K562 (cell line): ENCODE measurements at regions of chr4 and their contacts with region 1.

Region 1: GRCh38 chr4:93791570-93792195 is 36.9 kb upstream of the ATOH1 start:
- DNase-seq: peak; percentile 46 to 70 (median 60)
- ATAC-seq: peak; percentile 95
- H3K4me3 ChIP-seq: no peak overlapping the region
- H3K27ac ChIP-seq: no peak overlapping the region
- H3K4me1 ChIP-seq: no peaks in the 10 kb centered on the region
- H3K27me3 ChIP-seq: no peaks in the 10 kb centered on the region
- CTCF ChIP-seq: peak; percentile 72 to 81 (median 77)
- EP300 ChIP-seq: no peak
- POLR2A ChIP-seq: no peak
- RAD21 ChIP-seq: peak; percentile 74 to 76

Region 2: GRCh38 chr4:93437991-93438390 is 353.7 kb before region 1 on chr4:
- CTCF ChIA-PET with region 1: no interaction called
- POLR2A ChIA-PET with region 1: no interaction called
- in situ Hi-C with region 1: no loop called
- intact Hi-C with region 1: no loop called
- DNase-seq: no peak
- ATAC-seq: no peak
- H3K4me3 ChIP-seq: no peak overlapping the region
- H3K27ac ChIP-seq: no peak overlapping the region
- H3K4me1 ChIP-seq: no peaks in the 10 kb centered on the region
- H3K27me3 ChIP-seq: no peaks in the 10 kb centered on the region
- CTCF ChIP-seq: no peak
- EP300 ChIP-seq: no peak
- POLR2A ChIP-seq: no peak
- RAD21 ChIP-seq: no peak

Region 3: GRCh38 chr4:93693141-93693540 is 98.5 kb before region 1 on chr4:
- CTCF ChIA-PET with region 1: no interaction called
- POLR2A ChIA-PET with region 1: no interaction called
- in situ Hi-C with region 1: no loop called
- intact Hi-C with region 1: no loop called
- DNase-seq: no peak
- ATAC-seq: no peak
- H3K4me3 ChIP-seq: no peak overlapping the region
- H3K27ac ChIP-seq: no peak overlapping the region
- H3K4me1 ChIP-seq: no peaks in the 10 kb centered on the region
- H3K27me3 ChIP-seq: no peaks in the 10 kb centered on the region
- CTCF ChIP-seq: no peak
- EP300 ChIP-seq: no peak
- POLR2A ChIP-seq: no peak
- RAD21 ChIP-seq: no peak

Region 4: DNA sequence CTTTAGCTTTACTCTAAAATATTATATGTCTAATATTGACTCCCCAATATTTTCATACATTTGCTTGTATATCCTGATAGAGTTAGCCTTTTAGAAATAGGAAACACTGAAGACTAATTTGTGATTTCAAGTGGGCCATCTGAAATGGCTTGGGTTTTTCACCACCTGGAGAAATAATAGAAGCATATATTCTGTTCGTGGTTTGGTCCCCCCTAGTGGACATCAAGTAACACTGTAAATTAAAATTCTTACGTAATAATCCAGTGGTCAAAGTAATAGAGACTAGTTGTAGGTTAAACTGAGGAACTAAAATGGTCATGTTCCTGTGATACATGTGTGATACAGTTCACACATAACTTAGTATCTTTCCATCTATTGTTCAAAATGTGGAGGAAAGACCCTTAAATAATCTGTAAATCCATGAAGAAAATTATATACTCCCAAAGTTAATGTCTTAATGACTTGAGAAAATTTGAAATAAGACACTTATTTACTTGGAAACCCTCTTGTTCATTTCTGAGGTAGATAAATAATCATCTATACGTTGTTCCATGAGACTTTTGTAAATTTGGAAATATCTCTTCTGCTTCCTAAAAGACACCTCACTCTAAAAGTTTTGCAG is 336.1 kb after region 1 on chr4:
- CTCF ChIA-PET with region 1: interaction called, 3 read pairs
- POLR2A ChIA-PET with region 1: no interaction called
- in situ Hi-C with region 1: no loop called
- intact Hi-C with region 1: loop called (anchors 1 kb)
- DNase-seq: peak; percentile 29 to 46 (median 42)
- ATAC-seq: peak; percentile 85
- H3K4me3 ChIP-seq: no peak overlapping the region
- H3K27ac ChIP-seq: no peak overlapping the region
- H3K4me1 ChIP-seq: no peaks in the 10 kb centered on the region
- H3K27me3 ChIP-seq: no peaks in the 10 kb centered on the region
- CTCF ChIP-seq: peak; percentile 47 to 59 (median 48); a peak in 4 of 6 replicates
- EP300 ChIP-seq: no peak
- POLR2A ChIP-seq: no peak
- RAD21 ChIP-seq: peak; percentile 34 to 49

Region 5: GRCh38 chr4:94304365-94304971 is 512.8 kb after region 1 on chr4:
- CTCF ChIA-PET with region 1: no interaction called
- POLR2A ChIA-PET with region 1: no interaction called
- in situ Hi-C with region 1: no loop called
- intact Hi-C with region 1: loop called (anchors 5 kb)
- DNase-seq: peak in 3 of 4 experiments; percentile 15 to 59 (median 27)
- ATAC-seq: peak; percentile 85
- H3K4me3 ChIP-seq: no peak overlapping the region
- H3K27ac ChIP-seq: no peak overlapping the region
- H3K4me1 ChIP-seq: peaks cover 0 to 13% of the 10 kb centered on the region in 2 experiments; a peak in 2 of 5 replicates
- H3K27me3 ChIP-seq: no peaks in the 10 kb centered on the region
- CTCF ChIP-seq: peak; percentile 53 to 80 (median 58); a peak in 5 of 6 replicates
- EP300 ChIP-seq: no peak
- POLR2A ChIP-seq: no peak
- RAD21 ChIP-seq: peak; percentile 65 to 79

Region 6: DNA sequence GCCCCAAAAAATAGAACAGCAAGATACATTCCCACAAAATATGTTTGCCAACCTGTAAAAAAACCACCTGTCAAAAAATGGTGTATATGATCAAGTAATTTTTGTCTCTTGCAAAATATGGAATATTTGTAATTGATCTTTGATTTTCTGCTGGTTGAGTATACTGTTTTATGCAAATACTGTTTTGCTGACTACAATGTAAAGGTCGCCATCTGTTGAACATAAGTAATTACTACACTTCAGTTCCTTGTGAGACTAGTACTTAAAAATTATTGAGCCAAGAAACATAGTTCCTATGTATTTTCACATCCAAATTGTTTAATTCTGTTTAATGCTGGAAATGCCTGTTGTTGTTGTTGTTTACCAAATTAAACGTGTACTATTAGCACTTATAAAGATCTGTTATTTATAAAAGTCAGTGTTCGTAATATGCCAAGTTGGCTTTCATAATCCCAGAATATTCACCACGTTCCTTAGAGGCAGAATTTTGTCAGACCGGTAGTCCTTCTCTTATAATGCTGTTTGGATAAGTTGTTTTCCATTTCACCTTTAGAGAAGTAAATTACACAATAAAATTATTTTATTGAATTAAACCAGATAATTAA is 804.3 kb after region 1 on chr4:
- CTCF ChIA-PET with region 1: interaction called, 4 read pairs
- POLR2A ChIA-PET with region 1: no interaction called
- in situ Hi-C with region 1: loop called (anchors 25 kb)
- intact Hi-C with region 1: loop called (anchors 10 kb)
- DNase-seq: peak; percentile 14 to 59 (median 23)
- ATAC-seq: peak; percentile 79
- H3K4me3 ChIP-seq: no peak overlapping the region
- H3K27ac ChIP-seq: no peak overlapping the region
- H3K4me1 ChIP-seq: no peaks in the 10 kb centered on the region; a peak in 1 of 5 replicates
- H3K27me3 ChIP-seq: no peaks in the 10 kb centered on the region
- CTCF ChIP-seq: peak; percentile 30 to 77 (median 49); a peak in 3 of 6 replicates
- EP300 ChIP-seq: no peak
- POLR2A ChIP-seq: no peak
- RAD21 ChIP-seq: peak; percentile 90 to 92